A549 (cell line): ENCODE measurements at regions of chr11 and their contacts with region 1.

Region 1: DNA sequence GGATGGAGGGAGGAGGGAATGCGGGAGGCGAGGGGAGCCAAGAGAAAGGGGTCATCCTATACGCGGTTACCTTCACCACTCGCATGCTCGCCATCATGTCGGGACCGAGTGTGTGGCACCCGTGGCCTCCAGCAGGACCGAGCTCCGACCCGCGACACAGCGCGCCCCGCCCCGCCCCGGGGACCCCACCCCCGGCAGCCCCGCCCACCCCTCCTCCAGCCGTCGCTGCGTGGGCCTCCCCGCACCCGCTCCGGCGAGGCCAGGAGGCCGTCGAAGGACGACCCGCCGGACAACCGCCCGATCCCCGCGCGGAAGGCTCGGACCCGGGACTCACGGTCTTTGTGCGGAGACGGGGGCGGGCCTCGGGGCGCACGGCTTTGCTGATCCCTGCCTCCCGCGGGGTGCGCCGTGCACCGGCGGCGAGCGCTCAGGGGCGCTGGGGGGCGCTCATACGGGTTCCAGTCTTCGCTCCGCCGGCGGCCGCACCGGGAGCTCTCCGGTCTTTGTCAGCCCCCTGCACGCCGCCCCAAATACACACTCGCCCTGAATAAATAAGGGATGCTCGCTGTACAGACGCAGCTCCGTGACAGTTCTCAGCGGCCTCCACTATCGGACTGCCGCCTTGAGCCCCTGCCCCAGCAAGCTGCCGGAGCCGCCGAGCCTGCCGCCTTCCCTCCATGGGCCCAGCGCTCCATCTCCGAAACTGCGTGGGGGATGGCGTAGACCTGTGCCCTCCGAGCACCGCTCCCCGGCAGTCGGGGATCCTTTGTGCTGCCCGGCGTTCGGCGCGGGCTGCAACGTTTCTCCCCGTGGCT is at the start of gene UBE2L6:
- DNase-seq: peak; percentile 76 to 87
- ATAC-seq: peak; percentile 87 to 93
- H3K4me3 ChIP-seq: peak within 1 kb of the TSS; percentile 72
- H3K27ac ChIP-seq: peak within 1 kb of the TSS; percentile 74 to 89
- H3K4me1 ChIP-seq: peaks cover 20% of the 10 kb centered on the region
- CTCF ChIP-seq: no peak
- EP300 ChIP-seq: no peak
- POLR2A ChIP-seq: peak; percentile 36
- RAD21 ChIP-seq: no peak
- polyA plus RNA-seq, gene UBE2L6: 14.8 and 17.9 TPM in 2 replicates

Region 2: DNA sequence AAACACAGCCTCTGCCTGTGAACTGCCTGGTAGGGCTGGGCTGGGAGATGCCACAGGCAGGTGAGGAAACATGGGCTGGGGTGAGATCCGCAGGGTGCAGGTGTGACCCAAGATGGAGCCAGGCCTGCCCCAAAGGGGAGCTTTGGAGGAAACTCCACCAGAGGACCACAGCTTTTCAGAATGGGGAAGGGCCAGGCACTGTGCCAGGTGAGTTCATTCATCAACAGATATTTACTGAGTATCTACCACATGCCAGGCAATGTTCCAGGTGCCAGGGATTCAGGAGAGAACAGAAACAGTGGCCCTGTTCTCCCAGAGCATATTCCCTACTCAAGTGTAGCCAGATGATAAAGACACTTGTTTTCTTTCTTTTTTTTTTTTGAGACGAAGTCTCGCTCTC is 96.2 kb before region 1 on chr11:
- CTCF ChIA-PET with region 1: no interaction called
- POLR2A ChIA-PET with region 1: no interaction called
- DNase-seq: no peak
- ATAC-seq: no peak
- H3K4me3 ChIP-seq: no peak overlapping the region
- H3K27ac ChIP-seq: no peak overlapping the region
- H3K4me1 ChIP-seq: peaks cover 24% of the 10 kb centered on the region
- CTCF ChIP-seq: no peak
- EP300 ChIP-seq: no peak
- POLR2A ChIP-seq: no peak
- RAD21 ChIP-seq: no peak

Region 3: GRCh38 chr11:57599381-57599780 is 31.7 kb after region 1 on chr11:
- CTCF ChIA-PET with region 1: interaction called, 14 read pairs
- POLR2A ChIA-PET with region 1: interaction called, 4 read pairs
- DNase-seq: no peak
- ATAC-seq: no peak
- H3K4me3 ChIP-seq: no peak overlapping the region
- H3K27ac ChIP-seq: no peak overlapping the region
- H3K4me1 ChIP-seq: peaks cover 7% of the 10 kb centered on the region; the same call in 1 of the 3 replicates
- CTCF ChIP-seq: no peak
- EP300 ChIP-seq: no peak
- POLR2A ChIP-seq: no peak
- RAD21 ChIP-seq: no peak

Region 4: DNA sequence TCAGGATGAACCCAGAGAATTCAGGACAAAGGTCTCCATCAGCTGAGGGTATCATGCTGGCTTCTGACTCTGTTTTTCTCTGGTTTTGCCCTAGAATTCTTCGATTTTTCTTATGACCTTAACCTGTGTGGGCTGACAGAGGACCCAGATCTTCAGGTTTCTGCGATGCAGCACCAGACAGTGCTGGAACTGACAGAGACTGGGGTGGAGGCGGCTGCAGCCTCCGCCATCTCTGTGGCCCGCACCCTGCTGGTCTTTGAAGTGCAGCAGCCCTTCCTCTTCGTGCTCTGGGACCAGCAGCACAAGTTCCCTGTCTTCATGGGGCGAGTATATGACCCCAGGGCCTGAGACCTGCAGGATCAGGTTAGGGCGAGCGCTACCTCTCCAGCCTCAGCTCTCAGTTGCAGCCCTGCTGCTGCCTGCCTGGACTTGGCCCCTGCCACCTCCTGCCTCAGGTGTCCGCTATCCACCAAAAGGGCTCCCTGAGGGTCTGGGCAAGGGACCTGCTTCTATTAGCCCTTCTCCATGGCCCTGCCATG is 46.6 kb after region 1 on chr11:
- CTCF ChIA-PET with region 1: interaction called, 12 read pairs
- POLR2A ChIA-PET with region 1: no interaction called
- DNase-seq: no peak
- ATAC-seq: peak in 1 of 2 experiments; percentile 19; a peak in 2 of 6 replicates
- H3K4me3 ChIP-seq: no peak overlapping the region
- H3K27ac ChIP-seq: no peak overlapping the region
- H3K4me1 ChIP-seq: no peaks in the 10 kb centered on the region
- CTCF ChIP-seq: no peak
- EP300 ChIP-seq: no peak
- POLR2A ChIP-seq: no peak
- RAD21 ChIP-seq: no peak

Region 5: GRCh38 chr11:57632116-57632515 is 64.4 kb after region 1 on chr11:
- CTCF ChIA-PET with region 1: interaction called, 16 read pairs
- POLR2A ChIA-PET with region 1: no interaction called
- DNase-seq: no peak
- ATAC-seq: no peak
- H3K4me3 ChIP-seq: no peak overlapping the region
- H3K27ac ChIP-seq: no peak overlapping the region
- H3K4me1 ChIP-seq: no peaks in the 10 kb centered on the region
- CTCF ChIP-seq: no peak
- EP300 ChIP-seq: no peak
- POLR2A ChIP-seq: no peak
- RAD21 ChIP-seq: no peak

Region 6: GRCh38 chr11:57657194-57658022 is 89.7 kb after region 1 on chr11 and contains the start of gene CLP1:
- CTCF ChIA-PET with region 1: interaction called, 13 read pairs
- POLR2A ChIA-PET with region 1: no interaction called
- DNase-seq: peak; percentile 92 to 99
- ATAC-seq: peak; percentile 98 to 99
- H3K4me3 ChIP-seq: peak within 1 kb of the TSS; percentile 63
- H3K27ac ChIP-seq: peak within 1 kb of the TSS; percentile 73 to 84
- H3K4me1 ChIP-seq: peaks cover 11% of the 10 kb centered on the region; the same call in 1 of the 3 replicates
- CTCF ChIP-seq: no peak
- EP300 ChIP-seq: no peak
- POLR2A ChIP-seq: peak; percentile 44
- RAD21 ChIP-seq: no peak
- polyA plus RNA-seq, gene CLP1: 22.8 and 24.2 TPM in 2 replicates